Psoas muscle (tissue), 8 donors: ENCODE measurements at regions of chr4 and their contacts with region 1.

Region 1: DNA sequence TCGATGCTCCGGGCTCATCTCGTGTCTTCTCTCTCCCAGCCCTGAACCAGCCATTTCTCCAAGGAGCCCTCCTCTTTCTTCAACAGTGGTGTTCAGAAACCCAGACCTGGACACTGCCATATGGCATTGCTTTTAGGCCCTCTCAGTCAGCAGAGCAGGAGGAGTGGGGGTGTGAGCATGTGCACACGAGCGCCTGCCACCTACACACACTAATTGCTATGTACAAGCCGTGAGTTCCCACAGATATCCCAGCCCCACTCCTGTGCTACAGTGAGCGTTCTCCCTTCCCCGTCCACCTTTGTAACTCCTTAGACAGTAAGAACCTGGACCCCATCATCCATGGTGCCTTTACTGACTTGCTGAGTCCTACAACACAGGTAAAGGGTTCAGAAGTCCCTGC is 53.8 kb downstream of the TNIP2 start:
- DNase-seq: no peak
- ATAC-seq: no peak
- H3K4me3 ChIP-seq: no peak overlapping the region
- H3K27ac ChIP-seq: no peak overlapping the region
- H3K4me1 ChIP-seq: no peaks in the 10 kb centered on the region
- H3K27me3 ChIP-seq: no peaks in the 10 kb centered on the region
- CTCF ChIP-seq: no peak

Region 2: GRCh38 chr4:2662598-2662997 is 39.8 kb before region 1 on chr4:
- intact Hi-C with region 1: no loop called
- DNase-seq: no peak
- ATAC-seq: peak in 3 of 4 donors; percentile 18 to 52 (median 37)
- H3K4me3 ChIP-seq: no peak overlapping the region
- H3K27ac ChIP-seq: no peak overlapping the region
- H3K4me1 ChIP-seq: peaks cover 5% of the 10 kb centered on the region
- H3K27me3 ChIP-seq: no peaks in the 10 kb centered on the region
- CTCF ChIP-seq: no peak

Region 3: GRCh38 chr4:2686379-2687265 is 15.7 kb before region 1 on chr4:
- intact Hi-C with region 1: loop called in 1 of 2 experiments (anchors 1 kb)
- DNase-seq: no peak
- ATAC-seq: no peak
- H3K4me3 ChIP-seq: no peak overlapping the region
- H3K27ac ChIP-seq: no peak overlapping the region
- H3K4me1 ChIP-seq: no peaks in the 10 kb centered on the region
- H3K27me3 ChIP-seq: no peaks in the 10 kb centered on the region
- CTCF ChIP-seq: no peak

Region 4: GRCh38 chr4:2732991-2733868 is 30.9 kb after region 1 on chr4:
- intact Hi-C with region 1: loop called in 1 of 2 experiments (anchors 1 kb)
- DNase-seq: no peak
- ATAC-seq: peak in 1 of 4 donors; percentile 19
- H3K4me3 ChIP-seq: no peak overlapping the region
- H3K27ac ChIP-seq: no peak overlapping the region
- H3K4me1 ChIP-seq: peaks cover 4% of the 10 kb centered on the region
- H3K27me3 ChIP-seq: no peaks in the 10 kb centered on the region
- CTCF ChIP-seq: no peak